IMR-90 (cell line): ENCODE measurements at regions of chr2 and their contacts with region 1.

Region 1: DNA sequence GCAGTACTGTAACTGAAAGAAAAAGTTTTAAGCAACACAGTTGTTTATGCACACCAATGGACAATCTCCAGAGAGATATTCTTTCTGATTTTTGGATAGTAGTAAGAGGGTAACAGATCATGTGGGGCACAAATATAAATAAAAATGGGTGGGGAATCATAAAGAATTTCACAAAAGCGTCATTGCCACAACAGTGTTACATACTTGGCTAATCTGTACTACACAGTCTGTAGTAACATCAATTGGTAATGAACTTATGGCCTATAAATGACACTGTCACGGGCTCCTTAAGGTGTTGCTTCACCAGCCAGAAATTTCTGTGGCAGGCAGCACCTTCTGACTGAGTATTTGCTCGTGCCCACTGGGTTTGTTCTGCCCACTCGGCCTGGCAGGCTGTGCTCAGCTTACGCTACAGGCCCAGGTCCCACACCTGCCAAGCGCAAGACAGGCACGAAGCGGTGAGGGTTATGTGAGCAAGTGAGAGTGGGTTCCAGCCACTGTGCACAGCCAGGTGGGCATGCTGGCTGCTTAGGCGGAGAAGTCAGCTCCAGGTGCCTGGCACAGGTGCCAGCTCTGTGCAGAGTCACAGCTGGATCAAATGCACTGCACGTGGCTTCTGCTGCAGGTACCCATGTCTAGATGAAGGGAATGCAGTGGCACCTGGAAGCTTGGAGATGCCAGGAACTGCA is 532.5 kb upstream of the SLC39A10 start:
- DNase-seq: no peak
- ATAC-seq: no peak
- H3K4me3 ChIP-seq: no peak overlapping the region
- H3K27ac ChIP-seq: no peak overlapping the region
- H3K4me1 ChIP-seq: no peaks in the 10 kb centered on the region
- H3K27me3 ChIP-seq: no peaks in the 10 kb centered on the region
- CTCF ChIP-seq: no peak
- POLR2A ChIP-seq: no peak
- RAD21 ChIP-seq: no peak

Region 2: DNA sequence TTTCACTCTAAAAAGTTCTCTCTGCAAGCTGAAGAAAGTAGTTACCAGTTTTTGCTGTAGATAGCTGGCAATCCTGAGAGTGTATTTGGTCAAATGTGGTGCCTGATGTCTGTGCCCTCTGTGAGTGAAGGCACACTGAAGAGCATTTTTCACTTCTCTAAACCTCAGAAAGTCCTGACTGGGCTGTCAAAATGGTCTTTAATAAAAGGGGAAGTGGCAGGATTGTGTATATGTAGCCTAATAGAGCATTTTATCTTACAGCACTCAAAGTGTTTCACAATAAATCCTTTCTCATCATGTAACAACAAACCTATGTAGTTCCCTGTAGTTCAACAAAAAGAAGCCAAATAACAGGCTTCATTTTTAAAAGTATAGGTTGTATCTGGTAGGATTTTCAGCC is 1019.8 kb before region 1 on chr2:
- CTCF ChIA-PET with region 1: no interaction called
- POLR2A ChIA-PET with region 1: no interaction called
- dilution Hi-C with region 1: no loop called
- in situ Hi-C with region 1: no loop called
- intact Hi-C with region 1: loop called (anchors 5 kb)
- DNase-seq: no peak
- ATAC-seq: no peak
- H3K4me3 ChIP-seq: no peak overlapping the region
- H3K27ac ChIP-seq: no peak overlapping the region
- H3K4me1 ChIP-seq: no peaks in the 10 kb centered on the region
- H3K27me3 ChIP-seq: no peaks in the 10 kb centered on the region
- CTCF ChIP-seq: no peak
- POLR2A ChIP-seq: no peak
- RAD21 ChIP-seq: no peak

Region 3: GRCh38 chr2:194494401-194494800 is 630.1 kb before region 1 on chr2:
- CTCF ChIA-PET with region 1: no interaction called
- POLR2A ChIA-PET with region 1: no interaction called
- dilution Hi-C with region 1: no loop called
- in situ Hi-C with region 1: no loop called
- intact Hi-C with region 1: no loop called
- DNase-seq: no peak
- ATAC-seq: no peak
- H3K4me3 ChIP-seq: no peak overlapping the region
- H3K27ac ChIP-seq: no peak overlapping the region
- H3K4me1 ChIP-seq: no peaks in the 10 kb centered on the region
- H3K27me3 ChIP-seq: no peaks in the 10 kb centered on the region
- CTCF ChIP-seq: no peak
- POLR2A ChIP-seq: no peak
- RAD21 ChIP-seq: no peak

Region 4: DNA sequence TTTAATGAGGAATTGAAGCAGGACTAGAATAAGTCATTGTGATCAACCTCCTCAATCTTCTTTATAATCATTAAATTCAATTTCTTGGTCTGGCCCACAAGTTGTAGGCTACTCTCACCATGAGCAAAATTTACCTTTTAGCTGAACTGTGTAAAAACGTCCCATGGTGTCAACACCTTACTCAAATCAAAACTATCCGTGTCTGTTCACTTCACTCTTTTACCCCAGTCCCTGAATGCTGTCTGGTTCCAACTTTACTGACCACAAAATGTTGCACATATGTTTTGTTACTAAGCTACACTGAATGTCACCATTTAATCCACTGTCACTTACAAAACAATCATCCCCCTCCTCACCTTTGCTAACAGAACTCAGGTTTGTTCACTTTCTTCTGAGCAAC is 419.1 kb before region 1 on chr2:
- CTCF ChIA-PET with region 1: no interaction called
- POLR2A ChIA-PET with region 1: no interaction called
- dilution Hi-C with region 1: no loop called
- in situ Hi-C with region 1: no loop called
- intact Hi-C with region 1: no loop called
- DNase-seq: no peak
- ATAC-seq: no peak
- H3K4me3 ChIP-seq: no peak overlapping the region
- H3K27ac ChIP-seq: no peak overlapping the region
- H3K4me1 ChIP-seq: no peaks in the 10 kb centered on the region
- H3K27me3 ChIP-seq: no peaks in the 10 kb centered on the region
- CTCF ChIP-seq: no peak
- POLR2A ChIP-seq: no peak
- RAD21 ChIP-seq: no peak